ENCODE measurements at regions of chr12 and their contacts with region 1.

Region 1: GRCh38 chr12:96489103-96490056 is at the start of gene CFAP54:
- DNase-seq: peak; percentile 96
- H3K4me3 Mint-ChIP-seq: peak within 1 kb of the TSS; percentile 85
- H3K27ac Mint-ChIP-seq: no peak within 1 kb of the TSS
- H3K4me1 Mint-ChIP-seq: peaks cover 24% of the 10 kb centered on the region
- H3K27me3 Mint-ChIP-seq: no peaks in the 10 kb centered on the region
- total RNA-seq, gene CFAP54: 0.38 to 0.64 TPM

Region 2: GRCh38 chr12:95608252-95609033 is 880.9 kb before region 1 on chr12:
- CTCF ChIA-PET with region 1: no interaction called
- intact Hi-C with region 1: loop called (anchors 1 kb)
- DNase-seq: no peak
- H3K4me3 Mint-ChIP-seq: no peak overlapping the region
- H3K27ac Mint-ChIP-seq: no peak overlapping the region
- H3K4me1 Mint-ChIP-seq: peaks cover 3% of the 10 kb centered on the region
- H3K27me3 Mint-ChIP-seq: peaks cover 3% of the 10 kb centered on the region

Region 3: GRCh38 chr12:96035278-96036236 is 453.8 kb before region 1 on chr12 and contains the start of gene LTA4H:
- CTCF ChIA-PET with region 1: no interaction called
- intact Hi-C with region 1: loop called (anchors 1 kb)
- DNase-seq: peak; percentile 98
- H3K4me3 Mint-ChIP-seq: no peak within 1 kb of the TSS
- H3K27ac Mint-ChIP-seq: no peak within 1 kb of the TSS
- H3K4me1 Mint-ChIP-seq: peaks cover 19% of the 10 kb centered on the region
- H3K27me3 Mint-ChIP-seq: no peaks in the 10 kb centered on the region
- total RNA-seq, gene LTA4H: 125 TPM

Region 4: DNA sequence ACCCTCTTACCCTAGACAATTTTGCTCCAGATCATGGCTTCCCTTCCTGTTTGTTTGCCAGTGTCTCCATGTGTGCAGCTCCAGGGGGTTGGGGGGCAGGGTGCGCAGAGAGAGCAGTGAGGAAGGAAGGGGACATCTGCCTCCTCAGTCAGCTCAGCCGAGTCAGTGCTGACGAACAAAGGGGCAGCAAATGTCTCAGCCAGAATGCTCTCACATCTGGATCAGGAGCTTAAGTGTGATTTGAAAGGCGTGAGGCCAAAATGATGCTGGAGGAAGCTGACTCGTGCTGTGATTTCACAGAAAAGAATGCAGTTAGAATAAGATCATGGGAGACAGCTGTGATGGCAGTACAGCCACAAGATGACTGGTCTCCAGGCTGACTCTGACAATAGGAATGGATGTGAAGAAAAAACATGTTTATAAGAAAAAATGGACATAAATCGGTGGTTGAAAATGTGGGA is 62.1 kb before region 1 on chr12:
- CTCF ChIA-PET with region 1: interaction called, 5 read pairs
- intact Hi-C with region 1: loop called (anchors 1 kb)
- DNase-seq: peak; percentile 81
- H3K4me3 Mint-ChIP-seq: no peak overlapping the region
- H3K27ac Mint-ChIP-seq: peak overlapping the region; percentile 74
- H3K4me1 Mint-ChIP-seq: peaks cover 42% of the 10 kb centered on the region
- H3K27me3 Mint-ChIP-seq: no peaks in the 10 kb centered on the region

Region 5: DNA sequence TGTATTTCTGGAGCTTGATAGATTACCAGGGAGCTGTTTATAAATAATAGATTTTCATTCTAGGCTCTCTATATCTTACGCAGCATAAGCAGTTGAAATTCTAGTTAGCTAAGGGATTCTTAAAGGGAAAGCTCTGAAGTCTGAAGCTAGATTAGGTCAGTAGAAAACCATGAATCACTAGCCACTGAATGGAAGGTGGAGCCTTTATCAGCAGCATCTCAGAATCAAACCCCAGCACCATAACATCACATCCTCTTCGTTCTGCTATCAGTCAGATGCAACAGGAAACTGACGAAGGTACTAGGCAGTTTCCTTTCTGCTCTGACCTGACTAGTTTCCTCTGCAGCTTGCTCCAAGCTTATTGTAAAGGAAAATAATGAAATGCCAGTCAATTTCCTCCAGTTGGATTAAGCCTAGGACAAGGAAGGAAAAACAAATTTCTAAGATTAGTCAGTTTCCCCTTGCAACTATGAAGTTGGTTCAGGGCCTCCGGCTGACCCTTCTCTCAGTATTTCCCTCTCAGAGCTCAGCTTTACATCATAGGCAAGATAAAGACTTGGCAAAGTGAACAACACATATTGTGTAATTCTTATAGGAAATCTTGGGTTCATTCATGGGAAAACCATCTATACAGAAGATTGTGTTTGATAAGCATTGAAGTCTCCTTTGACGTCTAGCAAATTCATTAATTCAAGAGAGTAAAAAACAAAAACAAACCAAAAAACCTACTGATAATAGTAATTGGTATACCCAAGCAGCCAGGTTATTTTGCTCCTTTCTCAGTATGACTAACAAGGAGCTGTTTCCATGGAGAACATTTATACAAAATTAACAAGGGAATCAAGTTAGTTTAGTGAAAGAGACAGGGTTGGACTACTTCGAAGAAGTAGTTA is 43.4 kb before region 1 on chr12:
- CTCF ChIA-PET with region 1: interaction called, 5 read pairs
- intact Hi-C with region 1: loop called (anchors 1 kb)
- DNase-seq: peak; percentile 68
- H3K4me3 Mint-ChIP-seq: peak overlapping the region; percentile 28
- H3K27ac Mint-ChIP-seq: peak overlapping the region; percentile 94
- H3K4me1 Mint-ChIP-seq: peaks cover 39% of the 10 kb centered on the region
- H3K27me3 Mint-ChIP-seq: no peaks in the 10 kb centered on the region

Region 6: GRCh38 chr12:96516472-96517430 is 27.4 kb after region 1 on chr12:
- CTCF ChIA-PET with region 1: interaction called, 22 read pairs
- intact Hi-C with region 1: loop called (anchors 1 kb)
- DNase-seq: peak; percentile 96
- H3K4me3 Mint-ChIP-seq: peak overlapping the region; percentile 2
- H3K27ac Mint-ChIP-seq: peak overlapping the region; percentile 25
- H3K4me1 Mint-ChIP-seq: peaks cover 16% of the 10 kb centered on the region
- H3K27me3 Mint-ChIP-seq: no peaks in the 10 kb centered on the region

Region 7: GRCh38 chr12:96719660-96720363 is 230.4 kb after region 1 on chr12:
- CTCF ChIA-PET with region 1: no interaction called
- intact Hi-C with region 1: loop called (anchors 5 kb)
- DNase-seq: peak; percentile 52
- H3K4me3 Mint-ChIP-seq: peak overlapping the region; percentile 77
- H3K27ac Mint-ChIP-seq: peak overlapping the region; percentile 85
- H3K4me1 Mint-ChIP-seq: peaks cover 11% of the 10 kb centered on the region
- H3K27me3 Mint-ChIP-seq: no peaks in the 10 kb centered on the region

Measured in activated naive CD4-positive, alpha-beta T cell treated with anti-CD3 and anti-CD28 coated beads for 36 hours (primary cell).